Calu3 (cell line): ENCODE measurements at regions of chr1 and their contacts with region 1.

Region 1: GRCh38 chr1:150561974-150562445 is 12.8 kb downstream of the ADAMTSL4 start:
- DNase-seq: peak; percentile 95
- H3K4me3 Mint-ChIP-seq: peak overlapping the region; percentile 75
- H3K27ac Mint-ChIP-seq: peak overlapping the region; percentile 95
- H3K4me1 Mint-ChIP-seq: peaks cover 51% of the 10 kb centered on the region
- H3K27me3 Mint-ChIP-seq: no peaks in the 10 kb centered on the region
- CTCF ChIP-seq: no peak

Region 2: GRCh38 chr1:150486964-150487762 is 74.8 kb before region 1 on chr1 and contains the start of gene TARS2:
- CTCF ChIA-PET with region 1: no interaction called
- intact Hi-C with region 1: loop called (anchors 1 kb)
- DNase-seq: peak; percentile 98
- H3K4me3 Mint-ChIP-seq: peak within 1 kb of the TSS; percentile 88
- H3K27ac Mint-ChIP-seq: peak within 1 kb of the TSS; percentile 87
- H3K4me1 Mint-ChIP-seq: peaks cover 10% of the 10 kb centered on the region
- H3K27me3 Mint-ChIP-seq: no peaks in the 10 kb centered on the region
- CTCF ChIP-seq: peak; percentile 48
- total RNA-seq, gene TARS2: 42.2 and 51.7 TPM in 2 replicates

Region 3: GRCh38 chr1:150578965-150579798 is 17.2 kb after region 1 on chr1 and contains the start of gene MCL1:
- CTCF ChIA-PET with region 1: interaction called, 22 read pairs
- intact Hi-C with region 1: loop called (anchors 2 kb)
- DNase-seq: peak; percentile 95
- H3K4me3 Mint-ChIP-seq: peak within 1 kb of the TSS; percentile 99
- H3K27ac Mint-ChIP-seq: peak within 1 kb of the TSS; percentile 99
- H3K4me1 Mint-ChIP-seq: peaks cover 30% of the 10 kb centered on the region
- H3K27me3 Mint-ChIP-seq: no peaks in the 10 kb centered on the region
- CTCF ChIP-seq: no peak
- total RNA-seq, gene MCL1: 261 and 262 TPM in 2 replicates

Region 4: GRCh38 chr1:150629115-150629928 is 67.3 kb after region 1 on chr1 and contains the start of gene ENSA:
- CTCF ChIA-PET with region 1: interaction called, 14 read pairs
- intact Hi-C with region 1: no loop called
- DNase-seq: peak; percentile 98
- H3K4me3 Mint-ChIP-seq: no peak within 1 kb of the TSS
- H3K27ac Mint-ChIP-seq: no peak within 1 kb of the TSS
- H3K4me1 Mint-ChIP-seq: peaks cover 23% of the 10 kb centered on the region
- H3K27me3 Mint-ChIP-seq: no peaks in the 10 kb centered on the region
- CTCF ChIP-seq: no peak
- total RNA-seq, gene ENSA: 253 and 276 TPM in 2 replicates

Region 5: DNA sequence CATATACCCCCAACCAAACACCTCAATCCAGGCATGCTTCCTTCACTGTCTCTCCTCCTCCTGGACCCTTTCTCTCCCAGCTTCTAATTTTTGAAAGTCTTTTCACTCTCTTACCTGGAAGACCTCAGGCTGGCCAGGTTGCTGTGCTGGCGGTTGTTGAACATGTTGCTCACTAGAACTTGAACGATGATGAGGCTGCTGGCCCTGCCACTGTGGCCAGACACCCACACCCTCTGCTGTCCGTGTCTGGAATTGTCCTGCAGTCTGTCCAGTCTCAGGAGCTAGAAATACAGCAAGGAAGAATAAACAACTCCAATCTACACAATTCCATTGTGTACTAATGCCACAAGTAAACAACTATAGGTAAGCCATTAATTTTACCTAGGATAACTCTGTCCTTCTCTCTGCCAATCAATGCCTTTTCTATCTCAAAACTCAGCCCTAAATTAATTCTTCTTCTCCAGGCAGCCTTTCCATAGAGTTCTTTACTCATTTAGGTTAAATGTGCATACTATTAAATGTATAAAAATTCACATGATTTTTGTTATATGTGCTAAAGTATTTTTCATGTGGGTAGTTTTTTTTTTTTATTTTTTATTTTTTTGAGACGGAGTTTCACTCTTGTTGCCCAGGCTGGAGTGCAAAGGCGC is 251.2 kb after region 1 on chr1:
- CTCF ChIA-PET with region 1: interaction called, 24 read pairs
- intact Hi-C with region 1: loop called (anchors 5 kb)
- DNase-seq: peak; percentile 81
- H3K4me3 Mint-ChIP-seq: no peak overlapping the region
- H3K27ac Mint-ChIP-seq: no peak overlapping the region
- H3K4me1 Mint-ChIP-seq: no peaks in the 10 kb centered on the region
- H3K27me3 Mint-ChIP-seq: no peaks in the 10 kb centered on the region
- CTCF ChIP-seq: peak; percentile 85

Region 6: DNA sequence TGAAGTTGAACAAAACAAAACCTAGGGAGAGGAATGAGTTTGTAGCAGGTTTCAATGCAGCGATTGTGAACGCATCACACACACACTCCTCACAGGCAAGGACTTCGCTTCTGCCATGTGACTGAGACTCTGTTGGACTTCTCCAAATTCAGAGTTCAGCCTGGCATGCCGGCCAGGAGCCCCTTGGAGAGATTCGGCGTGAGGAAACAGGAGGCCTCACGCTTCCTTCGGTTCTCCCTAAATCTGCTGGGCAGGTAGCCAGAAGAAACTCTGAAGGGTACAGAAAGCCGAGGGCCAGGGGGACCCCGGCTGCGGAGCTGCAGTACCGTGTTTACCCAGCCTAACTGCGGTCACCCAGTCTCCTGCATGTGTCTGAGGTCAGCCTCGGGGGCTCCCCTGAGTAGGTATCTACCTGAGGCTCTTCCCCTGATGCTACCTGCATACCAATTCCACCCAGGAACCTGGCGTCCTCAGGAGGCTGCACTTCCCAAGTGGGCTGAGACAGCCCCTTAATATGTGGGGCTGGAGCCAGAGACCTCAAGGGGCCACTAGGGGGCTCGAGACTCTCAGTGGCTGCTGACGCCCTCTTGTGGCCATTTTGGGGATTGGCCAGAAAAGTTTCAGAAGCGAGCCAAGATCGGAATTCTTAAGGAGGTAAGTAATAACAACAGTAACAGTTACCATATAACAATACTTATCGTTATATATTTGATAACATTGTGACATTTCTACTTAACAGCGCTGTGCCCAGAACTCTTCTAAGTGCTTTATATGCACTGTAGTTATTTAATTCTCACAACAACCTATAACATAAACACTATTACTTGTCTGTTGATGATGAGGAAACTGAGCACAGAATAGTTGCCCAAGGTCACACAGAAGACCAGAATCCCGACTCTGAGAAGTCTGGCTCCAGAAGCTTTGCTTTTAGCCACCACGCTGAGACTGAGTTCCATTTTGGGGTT is 417.4 kb after region 1 on chr1:
- CTCF ChIA-PET with region 1: no interaction called
- intact Hi-C with region 1: loop called (anchors 5 kb)
- DNase-seq: peak; percentile 93
- H3K4me3 Mint-ChIP-seq: no peak overlapping the region
- H3K27ac Mint-ChIP-seq: no peak overlapping the region
- H3K4me1 Mint-ChIP-seq: peaks cover 54% of the 10 kb centered on the region
- H3K27me3 Mint-ChIP-seq: no peaks in the 10 kb centered on the region
- CTCF ChIP-seq: peak; percentile 100